CD8-positive, alpha-beta T cell (primary cell): ENCODE measurements at regions of chr3 and their contacts with region 1.

Region 1: DNA sequence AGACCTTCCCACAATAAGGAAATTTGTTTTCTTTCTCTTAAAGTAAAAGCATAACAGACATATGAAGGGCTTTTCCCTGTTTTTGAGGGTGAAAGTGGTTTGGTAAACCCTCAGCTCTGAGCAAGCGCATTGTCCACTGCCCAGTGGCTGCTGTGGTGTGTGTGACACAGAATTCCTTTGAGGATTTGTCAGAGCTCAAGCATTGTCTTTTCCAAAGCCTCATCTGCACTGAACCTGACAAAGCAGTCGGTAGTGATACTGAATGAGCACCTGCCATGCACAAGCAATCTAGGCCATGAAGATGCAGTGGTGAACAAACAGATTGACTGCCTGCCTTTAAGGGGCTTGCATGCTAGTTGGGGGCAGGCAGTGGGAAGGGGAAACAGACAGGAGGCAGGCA is 128.3 kb downstream of the PLCL2 start:
- DNase-seq: no peak
- ATAC-seq: no peak
- H3K4me3 ChIP-seq: no peak overlapping the region
- H3K4me3 Mint-ChIP-seq: no peak overlapping the region
- H3K27ac ChIP-seq: no peak overlapping the region
- H3K27ac Mint-ChIP-seq: no peak overlapping the region
- H3K4me1 ChIP-seq: no peaks in the 10 kb centered on the region
- H3K4me1 Mint-ChIP-seq: peaks cover 55% of the 10 kb centered on the region
- H3K27me3 ChIP-seq: no peaks in the 10 kb centered on the region
- H3K27me3 Mint-ChIP-seq: no peaks in the 10 kb centered on the region
- CTCF ChIP-seq: no peak

Region 2: DNA sequence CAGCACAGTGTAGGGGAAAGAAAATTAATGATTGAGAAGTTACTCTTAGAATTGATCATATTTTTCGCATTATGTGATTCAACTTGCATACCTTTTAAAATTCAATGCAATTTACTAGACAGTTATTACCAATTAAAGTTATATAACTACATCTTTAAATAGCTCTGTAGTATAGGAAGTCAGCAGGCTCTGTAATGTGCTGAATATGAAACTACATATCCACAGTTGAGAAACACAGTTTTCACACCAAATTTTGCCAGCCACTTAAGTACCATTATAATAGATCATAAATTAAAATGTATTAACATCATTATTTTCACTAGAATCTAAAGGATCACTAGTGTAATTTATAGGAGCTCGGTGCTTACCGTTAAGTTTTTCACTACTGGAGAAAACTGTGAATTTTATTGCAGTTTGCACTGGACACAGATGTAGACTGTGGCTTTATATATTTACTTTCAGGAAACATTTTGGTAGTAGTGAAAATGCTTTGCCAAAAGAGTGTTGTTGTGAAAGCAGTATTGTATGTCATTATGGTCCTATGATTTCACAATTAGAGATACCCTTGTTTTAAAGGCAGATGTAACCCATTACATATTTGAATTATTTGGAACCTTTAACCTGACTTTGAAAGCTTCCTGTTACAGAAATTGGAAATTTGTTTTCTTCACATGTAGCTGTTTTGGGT is 14.7 kb before region 1 on chr3:
- CTCF ChIA-PET with region 1: interaction called, 3 read pairs
- POLR2A ChIA-PET with region 1: no interaction called
- intact Hi-C with region 1: loop called in 1 of 2 experiments (anchors 2 kb)
- DNase-seq: no peak
- ATAC-seq: no peak
- H3K4me3 ChIP-seq: no peak overlapping the region
- H3K4me3 Mint-ChIP-seq: no peak overlapping the region
- H3K27ac ChIP-seq: no peak overlapping the region
- H3K27ac Mint-ChIP-seq: peak overlapping the region; percentile 39
- H3K4me1 ChIP-seq: peaks cover 46% of the 10 kb centered on the region
- H3K4me1 Mint-ChIP-seq: peaks cover 78% of the 10 kb centered on the region
- H3K27me3 ChIP-seq: no peaks in the 10 kb centered on the region
- H3K27me3 Mint-ChIP-seq: no peaks in the 10 kb centered on the region
- CTCF ChIP-seq: no peak